Endothelial cell of umbilical vein (primary cell): ENCODE measurements at regions of chr11 and their contacts with region 1.

Region 1: GRCh38 chr11:120746836-120747609 is 235.5 kb downstream of the GRIK4 start:
- DNase-seq: no peak
- H3K4me3 ChIP-seq: no peak overlapping the region
- H3K27ac ChIP-seq: no peak overlapping the region
- H3K4me1 ChIP-seq: no peaks in the 10 kb centered on the region
- H3K27me3 ChIP-seq: no peaks in the 10 kb centered on the region
- CTCF ChIP-seq: no peak
- POLR2A ChIP-seq: no peak

Region 2: GRCh38 chr11:120710354-120711131 is 36.5 kb before region 1 on chr11:
- CTCF ChIA-PET with region 1: interaction called, 10 read pairs
- POLR2A ChIA-PET with region 1: no interaction called
- dilution Hi-C with region 1: no loop called
- intact Hi-C with region 1: no loop called
- DNase-seq: no peak
- H3K4me3 ChIP-seq: no peak overlapping the region
- H3K27ac ChIP-seq: no peak overlapping the region
- H3K4me1 ChIP-seq: peaks cover 8% of the 10 kb centered on the region
- H3K27me3 ChIP-seq: no peaks in the 10 kb centered on the region
- CTCF ChIP-seq: no peak
- POLR2A ChIP-seq: no peak

Region 3: DNA sequence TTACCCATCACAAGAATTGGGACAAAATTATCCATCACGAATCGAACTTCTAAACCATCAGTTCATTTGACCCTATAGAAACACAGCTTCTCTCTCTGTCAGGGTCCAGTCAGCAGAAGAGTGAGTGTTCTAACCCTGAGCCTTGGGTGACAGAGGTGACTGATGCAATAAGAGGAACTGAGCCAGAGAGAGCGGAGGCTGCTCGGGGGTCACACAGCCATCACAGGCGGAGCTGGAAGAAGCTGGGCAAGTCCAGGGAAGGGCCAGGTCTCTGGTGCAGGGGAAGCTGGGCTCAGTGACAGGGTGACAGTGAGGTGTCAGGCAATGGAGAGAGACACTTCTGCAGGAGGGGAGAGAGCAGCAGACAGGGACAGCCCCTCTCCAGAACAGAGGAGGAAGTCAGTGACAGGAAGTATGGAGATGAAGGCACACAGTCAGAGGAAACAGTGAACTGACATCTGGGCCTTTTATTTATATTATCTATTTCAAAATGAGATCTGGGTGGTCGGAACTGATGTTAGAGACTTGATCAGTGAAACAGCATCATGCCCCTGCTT is 92.9 kb after region 1 on chr11:
- CTCF ChIA-PET with region 1: no interaction called
- POLR2A ChIA-PET with region 1: no interaction called
- dilution Hi-C with region 1: no loop called
- intact Hi-C with region 1: no loop called
- DNase-seq: no peak
- H3K4me3 ChIP-seq: no peak overlapping the region
- H3K27ac ChIP-seq: no peak overlapping the region
- H3K4me1 ChIP-seq: no peaks in the 10 kb centered on the region
- H3K27me3 ChIP-seq: peaks cover 0 to 3% of the 10 kb centered on the region in 2 experiments
- CTCF ChIP-seq: no peak
- POLR2A ChIP-seq: no peak